ENCODE measurements at regions of chr7 and their contacts with region 1.

Region 1: DNA sequence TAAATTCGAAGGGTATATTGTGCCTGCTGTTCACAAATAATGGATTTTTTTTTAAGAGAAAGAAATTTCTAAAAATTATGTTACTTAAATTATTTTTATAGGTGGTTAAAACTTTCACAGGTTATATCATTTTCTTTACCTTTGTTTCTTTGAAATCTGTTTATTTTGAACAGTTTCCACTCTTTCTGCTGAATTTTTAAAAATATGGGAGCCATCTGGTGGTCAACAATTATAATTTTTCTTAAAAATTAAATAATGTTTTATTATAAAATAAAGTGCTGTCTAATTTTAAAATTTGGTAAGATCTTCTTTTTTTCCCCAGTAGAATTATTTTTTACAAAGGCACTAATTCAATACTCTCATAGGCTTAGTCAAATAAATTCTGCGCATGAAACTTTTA is 263.9 kb downstream of the ETV1 start:
- DNase-seq: no peak
- H3K4me3 Mint-ChIP-seq: no peak overlapping the region
- H3K27ac Mint-ChIP-seq: no peak overlapping the region
- H3K4me1 Mint-ChIP-seq: peaks cover 15% of the 10 kb centered on the region
- H3K27me3 Mint-ChIP-seq: no peaks in the 10 kb centered on the region
- CTCF ChIP-seq: peak; percentile 43

Region 2: GRCh38 chr7:13532028-13532753 is 193.4 kb before region 1 on chr7:
- CTCF ChIA-PET with region 1: no interaction called
- intact Hi-C with region 1: loop called (anchors 5 kb)
- DNase-seq: no peak
- H3K4me3 Mint-ChIP-seq: no peak overlapping the region
- H3K27ac Mint-ChIP-seq: no peak overlapping the region
- H3K4me1 Mint-ChIP-seq: no peaks in the 10 kb centered on the region
- H3K27me3 Mint-ChIP-seq: no peaks in the 10 kb centered on the region
- CTCF ChIP-seq: no peak

Measured in Calu3 (cell line).